Upper lobe of right lung (tissue), 1 donor: ENCODE measurements at regions of chr3 and their contacts with region 1.

Region 1: GRCh38 chr3:139561959-139562676 is 22.6 kb upstream of the RBP1 start:
- DNase-seq: no peak
- ATAC-seq: peak; percentile 78
- H3K4me3 ChIP-seq: no peak overlapping the region
- H3K27ac ChIP-seq: no peak overlapping the region
- H3K4me1 ChIP-seq: no peaks in the 10 kb centered on the region
- H3K27me3 ChIP-seq: no peaks in the 10 kb centered on the region
- CTCF ChIP-seq: peak; percentile 56

Region 2: DNA sequence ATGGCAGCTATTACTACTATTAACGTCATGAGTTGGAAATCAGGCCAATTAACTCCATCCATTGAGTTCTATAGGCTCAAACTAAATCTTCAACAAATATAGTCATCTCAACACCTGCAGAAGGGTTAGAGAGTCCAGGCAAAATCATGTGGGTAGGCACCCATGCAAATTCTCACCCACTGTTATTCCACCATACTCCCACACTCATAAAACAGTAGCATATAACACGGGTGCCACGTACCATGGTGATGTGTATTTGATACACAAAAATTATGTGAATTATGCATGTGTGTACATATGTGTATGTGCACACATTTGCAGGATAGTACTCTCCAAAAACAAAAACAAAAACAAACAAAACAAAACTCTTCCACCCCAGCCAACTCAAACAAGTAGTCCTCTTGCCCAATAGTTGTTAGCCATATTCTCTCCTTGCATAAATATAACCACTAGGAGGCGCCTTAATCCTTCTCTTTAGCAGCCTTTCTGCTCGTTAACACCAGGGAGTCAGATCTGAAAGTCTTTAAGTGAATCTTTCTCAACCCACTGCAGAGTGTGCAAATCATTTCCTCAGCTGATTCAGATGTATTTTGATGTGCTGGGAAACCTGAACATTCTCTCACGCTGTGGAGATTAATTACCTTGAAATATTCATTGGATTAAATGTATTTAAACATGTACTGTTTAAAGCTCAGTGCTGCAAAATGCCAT is 134.7 kb before region 1 on chr3:
- intact Hi-C with region 1: loop called (anchors 10 kb)
- DNase-seq: no peak
- ATAC-seq: peak; percentile 95
- H3K4me3 ChIP-seq: no peak overlapping the region
- H3K27ac ChIP-seq: no peak overlapping the region
- H3K4me1 ChIP-seq: no peaks in the 10 kb centered on the region
- H3K27me3 ChIP-seq: no peaks in the 10 kb centered on the region
- CTCF ChIP-seq: peak; percentile 84